ENCODE measurements at regions of chr6 and their contacts with region 1.

Region 1: GRCh38 chr6:16761471-16762267 is 409 bp upstream of the ATXN1 start:
- DNase-seq: peak; percentile 85 to 95 (median 93)
- ATAC-seq: peak; percentile 52 to 55
- H3K4me3 ChIP-seq: peak overlapping the region; percentile 65
- H3K27ac ChIP-seq: peak overlapping the region; percentile 97
- H3K4me1 ChIP-seq: no peaks in the 10 kb centered on the region
- H3K27me3 ChIP-seq: no peaks in the 10 kb centered on the region

Region 2: GRCh38 chr6:16332175-16332542 is 429.5 kb before region 1 on chr6:
- intact Hi-C with region 1: loop called in 2 of 4 experiments (anchors 5 kb)
- DNase-seq: peak; percentile 70 to 81 (median 77)
- ATAC-seq: peak; percentile 80 to 86
- H3K4me3 ChIP-seq: no peak overlapping the region
- H3K27ac ChIP-seq: peak overlapping the region; percentile 59
- H3K4me1 ChIP-seq: peaks cover 6% of the 10 kb centered on the region
- H3K27me3 ChIP-seq: no peaks in the 10 kb centered on the region

Region 3: GRCh38 chr6:16409531-16410441 is 351.9 kb before region 1 on chr6:
- intact Hi-C with region 1: loop called in 1 of 4 experiments (anchors 10 kb)
- DNase-seq: peak; percentile 45 to 80 (median 78)
- ATAC-seq: peak; percentile 48 to 70
- H3K4me3 ChIP-seq: no peak overlapping the region
- H3K27ac ChIP-seq: no peak overlapping the region
- H3K4me1 ChIP-seq: peaks cover 2% of the 10 kb centered on the region
- H3K27me3 ChIP-seq: no peaks in the 10 kb centered on the region

Region 4: GRCh38 chr6:16514249-16514648 is 247.4 kb before region 1 on chr6:
- intact Hi-C with region 1: loop called in 3 of 4 experiments (anchors 5 to 10 kb)
- DNase-seq: no peak
- ATAC-seq: peak; percentile 58 to 61
- H3K4me3 ChIP-seq: no peak overlapping the region
- H3K27ac ChIP-seq: no peak overlapping the region
- H3K4me1 ChIP-seq: peaks cover 10% of the 10 kb centered on the region
- H3K27me3 ChIP-seq: no peaks in the 10 kb centered on the region

Region 5: GRCh38 chr6:16657768-16658167 is 103.9 kb before region 1 on chr6:
- intact Hi-C with region 1: no loop called
- DNase-seq: no peak
- ATAC-seq: no peak
- H3K4me3 ChIP-seq: no peak overlapping the region
- H3K27ac ChIP-seq: no peak overlapping the region
- H3K4me1 ChIP-seq: no peaks in the 10 kb centered on the region
- H3K27me3 ChIP-seq: no peaks in the 10 kb centered on the region

Region 6: GRCh38 chr6:16670183-16670582 is 91.5 kb before region 1 on chr6:
- intact Hi-C with region 1: loop called in 1 of 4 experiments (anchors 10 kb)
- DNase-seq: peak in 2 of 3 donors; percentile 39 to 70
- ATAC-seq: peak; percentile 60 to 78
- H3K4me3 ChIP-seq: no peak overlapping the region
- H3K27ac ChIP-seq: no peak overlapping the region
- H3K4me1 ChIP-seq: peaks cover 7% of the 10 kb centered on the region
- H3K27me3 ChIP-seq: no peaks in the 10 kb centered on the region

Region 7: DNA sequence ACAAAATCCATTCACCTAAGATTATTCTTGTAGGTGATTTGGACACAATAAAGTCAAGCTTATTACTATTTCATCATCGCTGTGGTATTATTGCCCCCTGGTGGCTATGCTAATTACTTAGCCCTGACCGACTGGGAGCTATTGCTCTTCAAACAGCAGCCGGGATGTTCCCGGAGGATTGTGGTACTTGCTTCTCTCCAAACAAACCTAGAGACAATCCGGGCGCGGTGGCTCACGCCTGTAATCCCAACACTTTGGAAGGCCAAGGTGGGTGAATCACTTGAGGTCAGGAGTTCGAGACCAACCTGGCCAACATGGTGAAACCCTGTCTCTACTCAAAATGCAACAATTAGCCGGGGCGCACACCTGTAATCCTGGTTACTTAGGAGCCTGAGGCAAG is 324.8 kb after region 1 on chr6:
- intact Hi-C with region 1: loop called in 2 of 4 experiments (anchors 10 kb)
- DNase-seq: peak in 2 of 3 donors; percentile 14 to 31
- ATAC-seq: peak; percentile 67 to 70
- H3K4me3 ChIP-seq: no peak overlapping the region
- H3K27ac ChIP-seq: no peak overlapping the region
- H3K4me1 ChIP-seq: no peaks in the 10 kb centered on the region
- H3K27me3 ChIP-seq: no peaks in the 10 kb centered on the region

Measured in right cardiac atrium (tissue), 5 donors.